Activated CD8-positive, alpha-beta T cell treated with anti-CD3 and anti-CD28 coated beads, Interleukin-2, amount 10 ng/mL, durations not matched to agents 7 days and 5 days (primary cell): ENCODE measurements at regions of chr7 and their contacts with region 1.

Region 1: GRCh38 chr7:24819916-24820689 is 62.8 kb upstream of the GSDME start:
- DNase-seq: peak; percentile 90
- ATAC-seq: peak; percentile 50
- H3K4me3 Mint-ChIP-seq: peak overlapping the region; percentile 60
- H3K27ac Mint-ChIP-seq: peak overlapping the region; percentile 93
- H3K4me1 Mint-ChIP-seq: peaks cover 42% of the 10 kb centered on the region
- H3K27me3 Mint-ChIP-seq: no peaks in the 10 kb centered on the region

Region 2: GRCh38 chr7:24836084-24836483 is 16.0 kb after region 1 on chr7:
- CTCF ChIA-PET with region 1: interaction called, 55 read pairs
- POLR2A ChIA-PET with region 1: interaction called, 6 read pairs
- DNase-seq: no peak
- ATAC-seq: peak; percentile 67
- H3K4me3 Mint-ChIP-seq: peak overlapping the region; percentile 12
- H3K27ac Mint-ChIP-seq: peak overlapping the region; percentile 80
- H3K4me1 Mint-ChIP-seq: peaks cover 53% of the 10 kb centered on the region
- H3K27me3 Mint-ChIP-seq: no peaks in the 10 kb centered on the region

Region 3: DNA sequence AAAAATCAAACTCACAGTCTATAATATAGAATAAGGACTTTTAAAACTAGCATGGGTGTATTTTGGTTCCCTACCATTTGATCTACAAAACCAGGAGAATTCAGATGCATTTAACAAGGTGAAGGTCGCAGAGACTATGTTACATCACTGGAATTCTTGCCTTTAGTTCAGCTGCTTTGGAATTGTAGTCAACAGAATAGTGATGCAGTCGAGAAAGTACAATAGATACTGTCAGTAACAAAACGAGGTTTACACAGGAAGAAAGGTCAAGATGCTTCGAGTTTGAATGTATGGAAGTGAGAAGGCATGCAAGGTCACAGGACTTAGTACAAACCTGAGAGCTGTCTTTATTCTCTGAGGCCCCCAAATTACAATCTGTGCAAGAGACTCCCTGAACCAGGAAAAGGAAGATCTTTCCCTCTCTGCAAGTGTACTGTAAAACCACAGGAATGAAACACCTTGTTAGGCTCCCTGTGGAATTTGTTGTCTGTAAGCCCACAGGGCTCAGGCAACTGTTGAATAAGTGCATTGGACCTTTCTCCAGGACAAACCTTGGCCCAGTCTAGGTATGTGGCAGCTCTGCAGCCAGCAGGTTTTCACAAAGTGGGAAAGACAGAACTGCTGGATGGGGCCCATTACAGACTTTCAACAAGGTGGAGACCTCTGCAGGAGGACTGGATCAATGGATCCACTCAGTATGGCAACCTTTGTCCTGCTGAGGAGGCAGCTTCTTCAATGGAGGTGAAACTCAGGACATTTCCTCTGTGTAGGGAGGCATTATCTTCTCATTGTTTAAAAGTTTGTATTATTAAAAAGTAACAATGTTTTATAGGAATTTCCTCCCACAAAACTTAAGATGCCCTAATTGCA is 38.2 kb after region 1 on chr7:
- CTCF ChIA-PET with region 1: no interaction called
- POLR2A ChIA-PET with region 1: no interaction called
- DNase-seq: no peak
- ATAC-seq: no peak
- H3K4me3 Mint-ChIP-seq: no peak overlapping the region
- H3K27ac Mint-ChIP-seq: no peak overlapping the region
- H3K4me1 Mint-ChIP-seq: peaks cover 11% of the 10 kb centered on the region
- H3K27me3 Mint-ChIP-seq: no peaks in the 10 kb centered on the region

Region 4: DNA sequence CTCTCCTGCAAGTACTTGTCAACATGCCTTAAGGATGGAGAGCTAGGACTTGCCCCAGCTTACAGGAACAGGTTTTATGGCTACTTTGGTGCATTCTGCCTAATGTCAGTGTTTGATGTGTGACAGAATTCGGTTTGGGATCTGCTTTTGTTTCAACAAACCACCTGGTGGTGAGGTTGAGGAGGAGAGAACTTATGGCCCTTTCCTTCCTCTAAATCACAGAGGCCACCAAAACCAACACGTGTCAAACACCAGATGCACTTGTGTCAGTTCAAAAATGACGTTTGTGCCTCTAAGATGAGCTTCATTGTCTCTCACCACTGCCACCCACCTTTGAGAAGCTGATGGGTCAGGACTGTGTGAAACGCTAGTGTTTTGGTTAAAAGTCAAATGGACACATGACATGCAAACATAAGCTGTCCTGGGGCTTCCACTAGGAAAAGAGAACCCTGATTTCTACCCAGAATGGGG is 76.0 kb after region 1 on chr7:
- CTCF ChIA-PET with region 1: interaction called, 14 read pairs
- POLR2A ChIA-PET with region 1: interaction called, 4 read pairs
- DNase-seq: peak; percentile 65
- ATAC-seq: peak; percentile 65
- H3K4me3 Mint-ChIP-seq: no peak overlapping the region
- H3K27ac Mint-ChIP-seq: peak overlapping the region; percentile 52
- H3K4me1 Mint-ChIP-seq: peaks cover 68% of the 10 kb centered on the region
- H3K27me3 Mint-ChIP-seq: no peaks in the 10 kb centered on the region

Region 5: DNA sequence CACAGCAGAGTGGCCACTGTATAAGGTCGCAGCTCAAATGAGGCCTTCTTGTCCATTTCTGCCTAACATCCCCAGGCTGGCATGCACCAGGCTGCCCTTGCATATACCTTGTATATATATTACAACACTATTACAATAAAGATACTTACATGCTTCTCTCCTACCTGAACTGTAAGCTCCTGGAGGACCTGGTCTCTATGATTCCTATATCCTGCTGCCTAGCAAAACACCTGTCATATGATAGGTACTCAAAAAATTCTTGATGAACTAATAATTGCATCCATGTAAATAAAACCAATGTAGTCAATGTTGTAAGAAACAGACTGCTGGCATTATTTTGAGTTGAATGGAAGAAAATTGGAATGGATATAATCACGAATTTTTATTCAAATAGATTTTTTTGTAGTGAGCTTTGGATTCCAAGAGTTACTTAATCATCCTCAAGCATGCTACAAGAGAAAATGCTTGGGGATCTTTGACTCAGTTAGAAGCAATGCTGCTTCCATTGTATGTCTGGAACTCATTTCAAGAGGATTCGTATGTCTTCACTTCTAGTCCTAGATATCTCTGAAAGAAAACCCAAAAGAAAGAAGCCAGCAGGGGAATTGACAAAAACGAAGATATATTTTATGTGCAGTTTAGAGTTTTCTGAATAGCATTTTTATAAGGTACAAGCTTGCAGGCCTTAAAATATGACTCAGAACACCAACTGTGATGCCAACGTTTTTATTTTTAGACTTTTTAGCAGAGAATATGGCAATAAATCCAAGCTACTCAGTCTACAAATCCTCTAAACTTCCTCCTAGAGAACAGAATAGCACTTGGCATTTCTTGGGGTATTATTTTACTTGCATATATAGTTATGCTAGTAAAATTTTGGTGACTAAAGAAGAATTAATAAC is 106.8 kb after region 1 on chr7:
- CTCF ChIA-PET with region 1: interaction called, 11 read pairs
- POLR2A ChIA-PET with region 1: no interaction called
- DNase-seq: no peak
- ATAC-seq: no peak
- H3K4me3 Mint-ChIP-seq: no peak overlapping the region
- H3K27ac Mint-ChIP-seq: no peak overlapping the region
- H3K4me1 Mint-ChIP-seq: peaks cover 73% of the 10 kb centered on the region
- H3K27me3 Mint-ChIP-seq: no peaks in the 10 kb centered on the region

Region 6: GRCh38 chr7:25028370-25029021 is 208.4 kb after region 1 on chr7:
- CTCF ChIA-PET with region 1: interaction called, 22 read pairs
- POLR2A ChIA-PET with region 1: no interaction called
- DNase-seq: peak; percentile 32
- ATAC-seq: peak; percentile 84
- H3K4me3 Mint-ChIP-seq: peak overlapping the region; percentile 2
- H3K27ac Mint-ChIP-seq: peak overlapping the region; percentile 90
- H3K4me1 Mint-ChIP-seq: peaks cover 36% of the 10 kb centered on the region
- H3K27me3 Mint-ChIP-seq: peaks cover 13% of the 10 kb centered on the region

Region 7: DNA sequence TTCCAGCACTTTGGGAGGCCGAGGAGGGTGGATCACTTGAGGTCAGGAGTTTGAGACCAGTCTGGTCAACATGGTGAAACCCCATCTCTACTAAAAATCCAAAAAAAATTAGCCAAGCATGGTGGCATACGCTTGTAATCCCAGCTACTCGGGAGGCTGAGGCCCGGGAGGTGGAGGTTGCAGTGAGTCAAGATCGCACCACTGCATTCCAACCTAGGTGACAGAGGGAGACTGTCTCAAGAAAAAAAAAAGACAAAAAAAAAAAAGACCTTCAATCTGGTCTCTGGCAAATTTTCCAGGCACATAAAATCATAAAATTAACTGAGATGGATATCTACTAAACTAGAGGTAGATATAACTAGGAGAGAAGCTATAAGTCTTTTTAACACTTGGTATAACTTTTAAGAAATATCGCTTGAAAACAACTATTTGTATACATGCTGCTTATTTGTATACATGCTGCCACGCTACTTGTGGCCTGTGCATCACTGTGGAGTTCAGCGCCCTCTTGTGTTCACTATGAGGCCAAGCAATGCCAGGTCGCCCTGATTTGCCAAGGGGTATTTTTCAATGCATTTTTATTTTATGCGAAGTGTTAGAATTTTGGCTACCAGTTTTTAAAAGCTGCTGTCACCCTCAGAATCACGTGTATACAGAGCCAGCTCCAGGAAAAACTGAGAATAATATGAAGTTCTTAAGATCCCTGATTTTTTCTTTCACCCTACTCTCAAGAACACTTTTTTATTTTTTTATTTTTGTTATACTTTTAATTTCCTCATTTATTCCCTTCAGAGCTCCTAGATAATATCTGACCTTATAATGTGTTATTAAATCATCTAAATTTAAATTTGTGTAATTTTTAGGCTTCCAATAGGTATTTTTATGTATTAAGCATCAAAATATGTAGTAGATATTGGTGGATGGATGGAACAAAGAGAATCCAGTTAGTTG is 278.3 kb after region 1 on chr7:
- CTCF ChIA-PET with region 1: interaction called, 132 read pairs
- POLR2A ChIA-PET with region 1: no interaction called
- DNase-seq: peak; percentile 74
- ATAC-seq: peak; percentile 83
- H3K4me3 Mint-ChIP-seq: no peak overlapping the region
- H3K27ac Mint-ChIP-seq: no peak overlapping the region
- H3K4me1 Mint-ChIP-seq: peaks cover 4% of the 10 kb centered on the region
- H3K27me3 Mint-ChIP-seq: peaks cover 11% of the 10 kb centered on the region